Activated naive CD4-positive, alpha-beta T cell treated with anti-CD3 and anti-CD28 coated beads for 36 hours (primary cell): ENCODE measurements at regions of chr17 and their contacts with region 1.

Region 1: GRCh38 chr17:7931709-7932482 is at the starts of genes CNTROB and TRAPPC1:
- DNase-seq: peak; percentile 100
- H3K4me3 Mint-ChIP-seq: peak within 1 kb of the TSS; percentile 91
- H3K27ac Mint-ChIP-seq: peak within 1 kb of the TSS; percentile 87
- H3K4me1 Mint-ChIP-seq: peaks cover 38% of the 10 kb centered on the region
- H3K27me3 Mint-ChIP-seq: no peaks in the 10 kb centered on the region
- total RNA-seq, gene CNTROB: 49.3 to 56.3 TPM
- total RNA-seq, gene TRAPPC1: 162 to 172 TPM

Region 2: DNA sequence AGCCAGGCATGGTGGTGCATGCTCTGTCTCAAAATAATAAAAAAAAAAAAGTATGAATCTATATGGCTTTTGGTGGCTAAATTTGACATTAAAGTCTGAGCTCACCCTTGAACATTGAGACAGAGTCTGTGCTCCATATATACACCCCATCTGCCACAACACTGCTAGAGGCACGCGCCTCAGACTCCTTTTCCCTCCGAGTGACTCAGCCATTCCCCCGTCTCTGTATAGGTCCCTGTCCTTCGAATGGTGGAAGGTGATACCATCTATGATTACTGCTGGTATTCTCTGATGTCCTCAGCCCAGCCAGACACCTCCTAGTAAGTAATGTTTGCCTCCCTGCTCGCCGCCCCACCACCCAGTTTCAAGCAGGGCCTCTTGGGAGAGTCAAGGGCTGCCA is 231.4 kb before region 1 on chr17:
- CTCF ChIA-PET with region 1: no interaction called
- intact Hi-C with region 1: no loop called
- DNase-seq: no peak
- H3K4me3 Mint-ChIP-seq: no peak overlapping the region
- H3K27ac Mint-ChIP-seq: no peak overlapping the region
- H3K4me1 Mint-ChIP-seq: peaks cover 7% of the 10 kb centered on the region
- H3K27me3 Mint-ChIP-seq: peaks cover 15% of the 10 kb centered on the region

Region 3: GRCh38 chr17:7951143-7951803 is 19.4 kb after region 1 on chr17:
- CTCF ChIA-PET with region 1: interaction called, 3 read pairs
- intact Hi-C with region 1: loop called (anchors 1 kb)
- DNase-seq: peak; percentile 68
- H3K4me3 Mint-ChIP-seq: no peak overlapping the region
- H3K27ac Mint-ChIP-seq: peak overlapping the region; percentile 20
- H3K4me1 Mint-ChIP-seq: peaks cover 16% of the 10 kb centered on the region
- H3K27me3 Mint-ChIP-seq: no peaks in the 10 kb centered on the region

Region 4: GRCh38 chr17:7997186-7997585 is 65.3 kb after region 1 on chr17:
- CTCF ChIA-PET with region 1: interaction called, 12 read pairs
- intact Hi-C with region 1: no loop called
- DNase-seq: peak; percentile 74
- H3K4me3 Mint-ChIP-seq: no peak overlapping the region
- H3K27ac Mint-ChIP-seq: no peak overlapping the region
- H3K4me1 Mint-ChIP-seq: peaks cover 8% of the 10 kb centered on the region
- H3K27me3 Mint-ChIP-seq: peaks cover 13% of the 10 kb centered on the region